Natural killer cell (primary cell): ENCODE measurements at regions of chr3 and their contacts with region 1.

Region 1: DNA sequence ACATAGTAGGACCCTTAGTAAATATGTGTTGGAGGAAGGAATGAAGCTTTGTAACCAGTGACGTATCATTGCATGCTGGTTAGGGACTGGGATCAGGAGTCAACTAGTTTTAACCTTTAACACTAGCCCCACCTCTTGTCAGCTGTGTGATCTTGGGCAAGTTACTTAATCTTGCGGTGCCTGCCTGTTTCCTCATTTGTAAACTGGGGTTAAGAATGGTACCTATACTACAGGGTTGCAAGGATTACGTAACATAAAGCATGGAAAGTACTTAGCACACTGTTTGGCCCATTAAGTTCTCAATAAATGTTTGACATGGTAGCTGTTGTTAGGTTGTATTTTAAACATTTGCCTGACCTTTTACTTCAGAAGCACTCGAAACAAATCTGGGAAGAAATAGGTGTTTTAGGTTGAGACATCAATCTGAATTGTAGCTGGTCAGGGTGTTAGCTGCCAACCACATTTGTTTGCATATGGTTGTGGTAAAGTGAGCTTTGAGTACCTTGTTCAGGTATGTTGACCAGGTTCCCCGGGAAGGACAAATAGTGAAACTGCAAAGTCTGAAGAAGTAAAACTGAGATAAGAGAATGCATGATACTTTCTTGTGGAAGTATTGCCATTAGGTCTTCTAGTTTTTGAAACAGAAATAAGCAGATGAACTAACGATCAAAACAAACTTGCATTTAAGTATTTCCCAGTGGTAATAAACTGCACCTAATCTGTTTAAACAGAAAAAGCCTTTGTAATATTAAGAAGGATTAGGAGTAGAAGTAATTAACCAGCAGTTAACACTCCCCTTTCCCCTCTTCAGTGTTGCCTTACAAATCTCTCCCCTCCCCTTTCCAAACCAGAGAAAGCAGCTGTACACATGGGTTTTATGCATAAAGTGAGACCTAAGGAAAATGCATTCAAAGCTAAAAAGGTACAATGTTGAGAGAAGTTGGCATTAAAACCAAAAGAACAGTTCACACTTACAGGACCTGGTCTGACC is 25.8 kb upstream of the SCAANT1 start:
- DNase-seq: peak; percentile 28 to 42
- ATAC-seq: peak; percentile 61 to 69 (median 66)
- H3K4me3 ChIP-seq: no peak overlapping the region
- H3K4me3 Mint-ChIP-seq: peak overlapping the region; percentile 67
- H3K27ac ChIP-seq: peak overlapping the region; percentile 41
- H3K27ac Mint-ChIP-seq: peak overlapping the region; percentile 84 to 88
- H3K4me1 ChIP-seq: peaks cover 26% of the 10 kb centered on the region
- H3K4me1 Mint-ChIP-seq: peaks cover 86 to 89% of the 10 kb centered on the region in 2 donors
- H3K27me3 ChIP-seq: no peaks in the 10 kb centered on the region
- H3K27me3 Mint-ChIP-seq: no peaks in the 10 kb centered on the region
- CTCF ChIP-seq: no peak

Region 2: GRCh38 chr3:63863148-63864007 is 74.6 kb before region 1 on chr3 and contains the starts of genes ATXN7 and THOC7:
- intact Hi-C with region 1: loop called (anchors 2 kb)
- DNase-seq: peak; percentile 71 to 83
- ATAC-seq: peak; percentile 80 to 89 (median 88)
- H3K4me3 ChIP-seq: peak within 1 kb of the TSS; percentile 61
- H3K4me3 Mint-ChIP-seq: peak within 1 kb of the TSS; percentile 93
- H3K27ac ChIP-seq: peak within 1 kb of the TSS; percentile 65
- H3K27ac Mint-ChIP-seq: peak within 1 kb of the TSS; percentile 89 to 90
- H3K4me1 ChIP-seq: peaks cover 17% of the 10 kb centered on the region
- H3K4me1 Mint-ChIP-seq: peaks cover 45 to 46% of the 10 kb centered on the region in 2 donors
- H3K27me3 ChIP-seq: no peaks in the 10 kb centered on the region
- H3K27me3 Mint-ChIP-seq: no peaks in the 10 kb centered on the region
- CTCF ChIP-seq: no peak
- total RNA-seq, gene ATXN7: 126 to 176 (median 146) TPM
- total RNA-seq, gene THOC7: 30.3 to 35.8 (median 32.5) TPM

Region 3: DNA sequence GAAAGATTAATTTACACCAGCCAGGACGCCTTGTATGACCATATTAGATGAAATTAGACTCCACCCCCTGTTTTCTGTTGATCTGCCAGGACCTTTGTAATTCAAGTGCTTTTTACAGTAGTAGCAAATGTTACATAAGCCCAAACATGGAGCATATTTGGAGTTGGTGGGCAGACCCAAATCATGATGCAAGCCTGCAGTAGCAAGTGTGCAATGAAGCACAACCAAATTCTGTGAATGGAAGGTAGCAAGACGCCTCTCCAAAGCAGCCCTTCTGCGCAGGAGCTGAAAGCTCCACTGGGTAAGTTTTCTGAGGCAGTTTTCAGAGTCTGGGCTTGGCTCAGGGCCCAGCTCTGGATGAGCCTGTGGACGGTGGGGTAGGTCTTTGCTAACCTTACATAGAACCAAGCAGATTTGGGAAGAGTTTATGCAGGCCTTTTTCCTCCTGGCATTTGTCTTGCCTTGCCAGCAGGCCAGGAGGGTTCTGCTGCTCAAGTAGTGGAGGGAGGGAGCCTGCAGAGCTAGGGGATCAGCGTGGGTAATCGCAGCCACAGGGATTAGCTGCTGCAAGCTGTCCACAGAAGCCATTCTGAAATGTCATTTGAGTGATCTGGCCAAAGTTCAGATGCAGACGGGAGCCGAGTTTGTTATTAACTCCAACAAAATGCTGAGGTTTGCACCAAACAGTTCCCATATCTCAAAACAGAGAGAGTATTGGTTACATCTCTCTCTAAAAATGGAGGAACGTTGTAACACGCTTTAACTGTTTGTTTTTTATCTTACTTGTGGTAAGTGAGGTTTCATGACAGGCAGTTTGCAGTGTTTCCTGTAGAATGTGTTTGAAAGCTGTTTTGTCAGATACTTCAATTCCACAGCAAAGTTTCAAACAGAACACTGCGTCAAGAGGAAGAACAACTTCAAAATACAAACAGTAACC is 30.0 kb after region 1 on chr3:
- intact Hi-C with region 1: loop called (anchors 2 kb)
- DNase-seq: peak; percentile 39 to 87
- ATAC-seq: peak; percentile 68 to 82 (median 72)
- H3K4me3 ChIP-seq: peak overlapping the region; percentile 52
- H3K4me3 Mint-ChIP-seq: peak overlapping the region; percentile 99
- H3K27ac ChIP-seq: peak overlapping the region; percentile 79
- H3K27ac Mint-ChIP-seq: peak overlapping the region; percentile 95 to 99
- H3K4me1 ChIP-seq: peaks cover 26% of the 10 kb centered on the region
- H3K4me1 Mint-ChIP-seq: peaks cover 72% of the 10 kb centered on the region in 2 donors
- H3K27me3 ChIP-seq: no peaks in the 10 kb centered on the region
- H3K27me3 Mint-ChIP-seq: no peaks in the 10 kb centered on the region
- CTCF ChIP-seq: no peak